ENCODE measurements at regions of chr3 and their contacts with region 1.

Region 1: GRCh38 chr3:116770815-116771450 is 61.4 kb downstream of the TUSC7 start:
- DNase-seq: peak; percentile 74 to 75
- H3K4me3 ChIP-seq: no peak overlapping the region
- H3K4me3 Mint-ChIP-seq: no peak overlapping the region
- H3K27ac Mint-ChIP-seq: no peak overlapping the region
- H3K4me1 ChIP-seq: no peaks in the 10 kb centered on the region
- H3K4me1 Mint-ChIP-seq: no peaks in the 10 kb centered on the region
- H3K27me3 ChIP-seq: no peaks in the 10 kb centered on the region
- H3K27me3 Mint-ChIP-seq: peaks cover 3% of the 10 kb centered on the region
- CTCF ChIP-seq: peak; percentile 81 to 95

Region 2: DNA sequence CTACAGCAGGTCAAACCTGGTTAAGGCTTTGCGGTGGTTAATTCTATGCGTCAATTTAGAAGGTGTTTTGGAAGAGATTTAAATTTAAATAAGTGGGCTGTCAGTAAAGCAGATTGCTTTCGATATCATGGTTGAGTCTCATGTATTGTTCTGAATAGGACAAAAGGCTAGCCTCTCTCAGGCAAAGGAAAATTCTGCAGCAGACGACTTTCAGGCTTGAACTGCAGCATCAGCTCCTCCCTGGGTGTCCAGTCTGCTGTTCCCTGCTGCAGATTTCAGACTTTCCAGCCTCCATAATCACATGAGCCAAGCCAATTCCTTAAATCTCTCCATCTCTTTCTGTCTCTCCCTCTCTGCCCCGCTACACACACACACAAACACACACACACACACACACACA is 81.9 kb after region 1 on chr3:
- CTCF ChIA-PET with region 1: interaction called, 4 read pairs
- POLR2A ChIA-PET with region 1: no interaction called
- intact Hi-C with region 1: loop called (anchors 2 kb)
- DNase-seq: no peak
- H3K4me3 ChIP-seq: no peak overlapping the region
- H3K4me3 Mint-ChIP-seq: no peak overlapping the region
- H3K27ac Mint-ChIP-seq: no peak overlapping the region
- H3K4me1 ChIP-seq: no peaks in the 10 kb centered on the region
- H3K4me1 Mint-ChIP-seq: no peaks in the 10 kb centered on the region
- H3K27me3 ChIP-seq: no peaks in the 10 kb centered on the region
- H3K27me3 Mint-ChIP-seq: peaks cover 5% of the 10 kb centered on the region
- CTCF ChIP-seq: no peak

Region 3: DNA sequence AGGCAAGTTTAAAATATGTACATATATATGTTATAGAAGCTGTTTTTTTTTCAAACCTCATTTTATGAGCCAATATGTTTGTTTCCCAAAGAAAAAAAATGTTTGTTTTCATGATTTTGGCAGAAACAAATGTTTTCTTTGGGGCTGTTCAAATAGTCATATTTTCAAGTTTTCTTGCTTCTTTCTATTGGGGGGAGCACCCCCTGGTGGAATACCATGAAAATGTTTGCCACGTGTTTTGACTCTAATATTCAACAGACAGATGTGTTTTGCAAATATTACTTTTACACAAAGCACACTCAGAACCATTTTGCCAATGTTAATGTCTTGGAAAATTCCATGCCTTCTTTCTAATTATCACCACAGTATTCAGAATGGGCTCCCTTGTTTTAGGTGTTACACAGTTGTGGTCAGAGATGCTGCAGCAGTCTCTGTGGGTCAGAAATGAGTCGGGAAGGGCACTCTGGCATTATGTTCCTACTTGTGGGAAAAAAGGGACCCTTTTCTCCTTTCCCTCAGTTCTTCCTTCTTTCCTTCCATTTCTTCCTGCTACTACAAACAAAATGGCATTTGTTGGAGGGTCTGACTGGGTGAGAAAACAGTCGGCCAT is 755.6 kb after region 1 on chr3:
- CTCF ChIA-PET with region 1: interaction called, 8 read pairs
- POLR2A ChIA-PET with region 1: no interaction called
- intact Hi-C with region 1: loop called (anchors 1 kb)
- DNase-seq: peak in 1 of 2 experiments; percentile 50
- H3K4me3 ChIP-seq: no peak overlapping the region
- H3K4me3 Mint-ChIP-seq: no peak overlapping the region
- H3K27ac Mint-ChIP-seq: no peak overlapping the region
- H3K4me1 ChIP-seq: no peaks in the 10 kb centered on the region
- H3K4me1 Mint-ChIP-seq: no peaks in the 10 kb centered on the region
- H3K27me3 ChIP-seq: no peaks in the 10 kb centered on the region
- H3K27me3 Mint-ChIP-seq: peaks cover 7% of the 10 kb centered on the region
- CTCF ChIP-seq: peak; percentile 58 to 61

Region 4: DNA sequence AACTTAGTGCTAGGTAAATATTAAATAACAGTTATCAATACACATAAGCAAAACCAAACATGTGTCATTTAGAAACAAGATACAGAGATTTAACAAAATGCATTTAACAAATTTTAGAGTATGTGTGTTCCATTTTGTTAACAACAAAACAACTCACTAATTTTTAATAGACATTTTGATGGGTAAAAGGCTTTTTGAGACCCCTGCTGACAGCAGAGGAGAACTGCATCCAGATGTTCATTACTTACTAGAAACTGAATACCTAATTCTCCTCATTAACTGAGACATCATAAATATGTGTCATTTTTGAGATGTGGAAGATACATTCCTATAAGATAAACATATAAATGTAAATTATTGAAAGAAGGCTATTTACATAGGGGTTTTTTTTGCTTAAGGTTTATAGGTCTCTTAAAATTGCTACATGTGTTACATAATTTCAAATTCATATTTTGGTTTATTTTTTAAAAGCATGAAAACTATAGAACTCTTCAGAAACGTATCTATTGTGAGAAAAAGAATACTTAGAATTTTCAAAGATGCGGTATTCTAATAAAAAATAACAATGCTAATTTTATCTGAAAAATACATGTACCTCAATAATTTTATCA is 948.5 kb after region 1 on chr3:
- CTCF ChIA-PET with region 1: no interaction called
- POLR2A ChIA-PET with region 1: no interaction called
- intact Hi-C with region 1: loop called (anchors 1 kb)
- DNase-seq: peak in 1 of 2 experiments; percentile 14
- H3K4me3 ChIP-seq: no peak overlapping the region
- H3K4me3 Mint-ChIP-seq: no peak overlapping the region
- H3K27ac Mint-ChIP-seq: no peak overlapping the region
- H3K4me1 ChIP-seq: no peaks in the 10 kb centered on the region
- H3K4me1 Mint-ChIP-seq: no peaks in the 10 kb centered on the region
- H3K27me3 ChIP-seq: no peaks in the 10 kb centered on the region
- H3K27me3 Mint-ChIP-seq: peaks cover 3% of the 10 kb centered on the region
- CTCF ChIP-seq: peak; percentile 57 to 68

Region 5: DNA sequence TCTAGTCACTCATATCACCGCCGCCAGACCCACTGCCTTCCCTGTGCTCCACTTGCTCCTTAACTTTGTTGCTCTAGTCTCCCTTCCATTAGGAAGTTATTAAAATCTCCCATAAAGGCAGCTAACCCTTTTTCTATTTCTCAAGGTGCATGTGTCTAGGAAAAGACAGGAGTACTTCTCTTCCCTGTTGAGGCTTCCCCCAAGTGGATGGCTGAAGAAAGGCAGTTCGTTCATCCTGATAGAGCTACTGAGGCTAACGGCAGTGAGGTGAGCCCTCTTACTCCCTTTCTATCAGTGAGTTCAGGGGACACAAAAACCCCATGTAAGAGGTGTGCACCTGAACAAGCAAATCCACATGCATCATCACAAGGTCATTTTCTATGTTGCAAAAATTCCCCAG is 1865.9 kb after region 1 on chr3:
- CTCF ChIA-PET with region 1: no interaction called
- POLR2A ChIA-PET with region 1: no interaction called
- intact Hi-C with region 1: loop called (anchors 5 kb)
- DNase-seq: peak; percentile 38 to 56
- H3K4me3 ChIP-seq: no peak overlapping the region
- H3K4me3 Mint-ChIP-seq: no peak overlapping the region
- H3K27ac Mint-ChIP-seq: no peak overlapping the region
- H3K4me1 ChIP-seq: no peaks in the 10 kb centered on the region
- H3K4me1 Mint-ChIP-seq: no peaks in the 10 kb centered on the region
- H3K27me3 ChIP-seq: no peaks in the 10 kb centered on the region
- H3K27me3 Mint-ChIP-seq: no peaks in the 10 kb centered on the region
- CTCF ChIP-seq: peak; percentile 51 to 57

Measured in Caco-2 (cell line).